Activated B cell treated with CpG ODN at 0.5 μM for 24 hours (primary cell): ENCODE measurements at regions of chr4 and their contacts with region 1.

Region 1: DNA sequence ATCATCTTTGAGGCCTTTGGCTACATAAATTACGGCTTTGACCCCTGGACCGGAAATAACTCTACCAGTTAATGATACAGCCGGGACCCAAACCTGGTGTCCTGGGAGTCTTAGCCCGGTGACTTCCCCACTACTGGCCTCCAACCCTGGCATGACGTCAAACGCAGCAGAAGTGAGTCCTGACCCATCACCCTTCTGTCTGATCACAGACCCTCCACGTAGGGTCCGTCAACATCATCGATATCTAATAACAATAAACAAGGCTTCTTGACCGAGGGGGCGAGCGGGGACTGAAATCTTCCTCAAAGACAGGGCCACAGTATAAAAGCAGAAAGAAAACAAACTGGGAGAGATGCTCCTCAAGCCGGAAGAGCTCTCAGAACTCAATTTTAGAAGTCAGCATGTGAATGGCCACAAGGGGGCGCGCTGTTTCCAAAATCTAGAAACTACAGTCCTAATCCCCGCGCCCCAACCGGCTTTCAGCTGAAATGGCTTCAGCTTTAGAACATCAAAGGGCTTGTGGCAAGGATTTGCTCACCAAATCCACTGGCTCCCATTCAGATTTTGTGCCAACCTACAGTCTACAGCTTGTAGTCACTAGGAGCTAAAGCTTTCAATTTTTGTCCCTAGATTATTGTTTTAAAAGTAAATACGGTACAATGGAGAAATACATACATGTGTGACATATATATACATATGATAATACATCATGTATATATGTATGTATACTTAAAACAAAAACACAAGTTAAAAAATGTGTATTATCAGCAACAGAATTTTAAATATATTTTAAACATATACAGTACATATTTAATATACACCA is 46.4 kb upstream of the ENPP6 start:
- DNase-seq: peak; percentile 80
- ATAC-seq: peak; percentile 20
- H3K4me3 Mint-ChIP-seq: peak overlapping the region; percentile 25
- H3K27ac Mint-ChIP-seq: peak overlapping the region; percentile 60
- H3K4me1 Mint-ChIP-seq: peaks cover 48% of the 10 kb centered on the region
- H3K27me3 Mint-ChIP-seq: no peaks in the 10 kb centered on the region
- CTCF ChIP-seq: peak; percentile 71

Region 2: DNA sequence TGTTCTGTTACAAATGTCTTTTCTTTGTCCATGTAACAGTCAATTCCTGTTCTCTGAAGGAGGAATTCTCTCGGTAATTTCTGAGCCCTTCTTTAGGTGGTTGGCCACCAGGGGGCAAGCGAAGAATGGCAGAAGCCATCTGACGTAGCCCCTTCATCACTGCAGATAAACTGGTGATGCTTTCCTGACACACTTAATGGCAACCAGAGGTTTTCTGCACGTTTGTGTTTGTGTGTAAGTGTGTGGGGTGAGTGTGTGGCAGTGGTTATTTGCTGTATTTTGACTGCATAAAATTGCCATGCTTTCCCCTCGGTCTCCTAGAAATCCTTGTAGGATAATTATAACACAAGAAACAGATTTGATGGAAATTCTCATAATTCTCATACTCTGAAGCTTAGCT is 423.8 kb before region 1 on chr4:
- CTCF ChIA-PET with region 1: no interaction called
- POLR2A ChIA-PET with region 1: no interaction called
- intact Hi-C with region 1: no loop called
- DNase-seq: peak; percentile 29
- ATAC-seq: no peak
- H3K4me3 Mint-ChIP-seq: no peak overlapping the region
- H3K27ac Mint-ChIP-seq: no peak overlapping the region
- H3K4me1 Mint-ChIP-seq: no peaks in the 10 kb centered on the region
- H3K27me3 Mint-ChIP-seq: peaks cover 13% of the 10 kb centered on the region
- CTCF ChIP-seq: peak; percentile 52

Region 3: GRCh38 chr4:184287697-184288255 is 23.7 kb after region 1 on chr4:
- CTCF ChIA-PET with region 1: interaction called, 119 read pairs
- POLR2A ChIA-PET with region 1: interaction called, 177 read pairs
- intact Hi-C with region 1: loop called (anchors 1 kb)
- DNase-seq: no peak
- ATAC-seq: no peak
- H3K4me3 Mint-ChIP-seq: peak overlapping the region; percentile 77
- H3K27ac Mint-ChIP-seq: peak overlapping the region; percentile 91
- H3K4me1 Mint-ChIP-seq: peaks cover 61% of the 10 kb centered on the region
- H3K27me3 Mint-ChIP-seq: no peaks in the 10 kb centered on the region
- CTCF ChIP-seq: no peak

Region 4: GRCh38 chr4:184343502-184344177 is 79.5 kb after region 1 on chr4:
- CTCF ChIA-PET with region 1: interaction called, 12 read pairs
- POLR2A ChIA-PET with region 1: interaction called, 11 read pairs
- intact Hi-C with region 1: no loop called
- DNase-seq: peak; percentile 39
- ATAC-seq: peak; percentile 50
- H3K4me3 Mint-ChIP-seq: peak overlapping the region; percentile 86
- H3K27ac Mint-ChIP-seq: peak overlapping the region; percentile 83
- H3K4me1 Mint-ChIP-seq: peaks cover 73% of the 10 kb centered on the region
- H3K27me3 Mint-ChIP-seq: no peaks in the 10 kb centered on the region
- CTCF ChIP-seq: no peak

Region 5: GRCh38 chr4:184506527-184507121 is 242.5 kb after region 1 on chr4:
- CTCF ChIA-PET with region 1: interaction called, 16 read pairs
- POLR2A ChIA-PET with region 1: interaction called, 4 read pairs
- intact Hi-C with region 1: loop called (anchors 1 kb)
- DNase-seq: peak; percentile 38
- ATAC-seq: peak; percentile 98
- H3K4me3 Mint-ChIP-seq: peak overlapping the region; percentile 67
- H3K27ac Mint-ChIP-seq: peak overlapping the region; percentile 88
- H3K4me1 Mint-ChIP-seq: peaks cover 58% of the 10 kb centered on the region
- H3K27me3 Mint-ChIP-seq: no peaks in the 10 kb centered on the region
- CTCF ChIP-seq: no peak

Region 6: GRCh38 chr4:184617561-184618196 is 353.6 kb after region 1 on chr4:
- CTCF ChIA-PET with region 1: no interaction called
- POLR2A ChIA-PET with region 1: no interaction called
- intact Hi-C with region 1: no loop called
- DNase-seq: no peak
- ATAC-seq: no peak
- H3K4me3 Mint-ChIP-seq: no peak overlapping the region
- H3K27ac Mint-ChIP-seq: no peak overlapping the region
- H3K4me1 Mint-ChIP-seq: peaks cover 24% of the 10 kb centered on the region
- H3K27me3 Mint-ChIP-seq: no peaks in the 10 kb centered on the region
- CTCF ChIP-seq: no peak

Region 7: DNA sequence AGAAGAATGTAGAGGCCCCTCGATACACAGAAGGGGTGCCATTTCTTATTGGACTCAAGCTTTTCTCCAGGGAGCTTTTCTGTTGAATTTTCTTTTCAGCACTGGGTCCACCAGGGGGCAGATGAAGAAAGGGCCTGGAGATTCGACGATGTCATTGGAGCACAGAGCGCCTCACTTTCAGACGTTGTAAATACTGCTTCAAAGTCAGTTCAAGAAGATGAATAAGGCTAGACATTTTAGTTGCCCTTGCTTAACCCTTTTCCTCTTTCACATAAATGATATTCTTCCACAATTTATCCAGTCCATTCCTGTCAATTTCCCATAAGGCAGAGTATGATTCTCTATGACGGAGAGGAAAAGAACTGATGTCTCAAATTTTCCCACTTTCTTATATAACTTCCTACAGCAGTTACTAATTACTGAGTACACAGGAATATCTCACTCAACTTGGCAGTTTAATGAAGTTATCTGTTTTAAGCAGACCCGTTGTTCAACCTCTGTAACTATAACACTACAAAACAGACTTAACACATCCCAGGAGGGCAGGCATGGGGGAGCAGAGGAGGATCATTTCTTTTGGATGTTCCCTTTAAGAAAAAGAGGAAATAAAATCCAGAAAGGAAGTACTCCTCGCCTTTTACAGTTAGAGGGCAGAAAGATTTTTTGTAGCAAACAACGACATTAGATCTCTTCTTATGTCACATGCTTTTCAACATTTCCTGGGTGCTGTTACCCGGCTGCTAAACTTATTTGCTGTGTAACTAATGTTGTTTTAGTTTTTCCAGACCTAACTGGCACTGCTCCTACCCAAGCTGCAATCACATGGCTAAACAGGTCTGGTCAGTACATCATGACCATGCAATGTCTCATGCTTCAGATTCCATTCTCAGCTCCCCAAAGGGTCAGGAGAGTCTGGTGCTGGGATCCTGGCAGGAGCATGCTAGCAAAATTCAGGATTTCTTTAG is 482.0 kb after region 1 on chr4:
- CTCF ChIA-PET with region 1: interaction called, 10 read pairs
- POLR2A ChIA-PET with region 1: interaction called, 6 read pairs
- intact Hi-C with region 1: loop called (anchors 1 kb)
- DNase-seq: peak; percentile 35
- ATAC-seq: peak; percentile 88
- H3K4me3 Mint-ChIP-seq: peak overlapping the region; percentile 5
- H3K27ac Mint-ChIP-seq: no peak overlapping the region
- H3K4me1 Mint-ChIP-seq: peaks cover 10% of the 10 kb centered on the region
- H3K27me3 Mint-ChIP-seq: no peaks in the 10 kb centered on the region
- CTCF ChIP-seq: no peak

Region 8: DNA sequence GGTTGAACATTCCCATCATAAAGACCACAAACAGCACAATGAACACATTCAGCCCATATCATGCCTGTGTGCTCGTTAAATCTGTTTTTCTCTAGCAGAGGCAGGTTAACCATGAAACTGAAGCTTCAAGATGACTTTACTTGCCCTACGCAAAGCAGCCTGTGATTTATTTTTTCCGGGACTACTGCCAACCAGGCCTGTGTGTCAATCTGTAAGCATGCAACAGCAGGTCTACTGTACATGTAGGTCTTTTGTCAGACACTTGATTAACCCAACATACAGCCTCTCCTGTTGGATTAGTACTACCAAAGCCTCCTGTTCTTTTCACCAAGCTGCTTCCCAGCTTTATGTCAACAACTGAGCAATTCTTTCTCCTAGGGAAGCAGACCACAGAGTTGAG is 647.2 kb after region 1 on chr4:
- CTCF ChIA-PET with region 1: no interaction called
- POLR2A ChIA-PET with region 1: no interaction called
- intact Hi-C with region 1: loop called (anchors 5 kb)
- DNase-seq: no peak
- ATAC-seq: no peak
- H3K4me3 Mint-ChIP-seq: no peak overlapping the region
- H3K27ac Mint-ChIP-seq: no peak overlapping the region
- H3K4me1 Mint-ChIP-seq: peaks cover 7% of the 10 kb centered on the region
- H3K27me3 Mint-ChIP-seq: peaks cover 3% of the 10 kb centered on the region
- CTCF ChIP-seq: no peak